HepG2 (cell line): ENCODE measurements at regions of chr2 and their contacts with region 1.

Region 1: GRCh38 chr2:64523666-64524603 is at the start of gene AFTPH:
- DNase-seq: peak; percentile 99
- ATAC-seq: peak; percentile 96
- H3K4me3 ChIP-seq: peak within 1 kb of the TSS; percentile 95 to 100 (median 98)
- H3K27ac ChIP-seq: peak within 1 kb of the TSS; percentile 73
- H3K4me1 ChIP-seq: peaks cover 30% of the 10 kb centered on the region
- H3K27me3 ChIP-seq: no peaks in the 10 kb centered on the region; a peak in 1 of 5 replicates
- CTCF ChIP-seq: peak; percentile 62
- EP300 ChIP-seq: peak; percentile 34 to 54; a peak in 2 of 4 replicates
- POLR2A ChIP-seq: peak; percentile 82 to 90
- RAD21 ChIP-seq: no peak; the same call in 1 of the 2 replicates
- total RNA-seq, gene AFTPH: 36.8 and 45.9 TPM in 2 replicates

Region 2: DNA sequence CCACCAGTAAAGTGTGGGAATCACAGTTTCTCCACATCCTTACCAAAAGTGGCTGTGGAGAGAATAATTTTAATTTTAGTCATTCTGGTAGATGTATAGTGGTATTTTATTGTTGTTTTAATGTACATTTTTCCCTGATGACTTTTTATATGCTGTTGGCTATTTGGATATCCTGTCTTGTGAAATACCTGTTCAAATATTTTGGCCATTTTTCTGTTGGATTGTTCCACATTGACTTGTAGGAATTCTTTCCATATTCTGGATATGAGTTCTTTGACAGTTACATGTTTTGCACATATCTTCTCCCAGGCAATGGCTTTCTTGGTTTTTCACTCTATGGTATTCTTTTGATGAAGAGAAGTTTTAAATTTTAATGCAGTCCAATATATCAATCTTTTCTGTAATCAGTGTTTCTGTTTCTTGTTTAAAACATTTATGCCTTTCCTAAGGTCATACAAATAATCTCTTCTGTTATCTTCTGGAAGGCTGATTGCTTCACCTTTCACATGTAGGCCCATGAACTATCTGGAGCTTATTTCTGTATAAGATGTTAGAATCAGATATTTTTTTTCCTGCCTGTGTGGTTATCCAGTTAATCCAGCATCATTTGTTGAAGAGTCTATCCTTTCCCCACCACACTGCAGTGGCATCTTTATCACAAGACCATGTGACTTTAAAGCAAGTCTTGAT is 19.2 kb after region 1 on chr2:
- CTCF ChIA-PET with region 1: no interaction called
- POLR2A ChIA-PET with region 1: interaction called, 6 read pairs
- in situ Hi-C with region 1: no loop called
- intact Hi-C with region 1: loop called (anchors 2 kb)
- DNase-seq: peak; percentile 44
- ATAC-seq: peak; percentile 20; the same call in 1 of the 3 replicates
- H3K4me3 ChIP-seq: peak overlapping the region in 2 of 3 experiments; percentile 35 to 38; a peak in 3 of 6 replicates
- H3K27ac ChIP-seq: peak overlapping the region; percentile 10
- H3K4me1 ChIP-seq: peaks cover 65% of the 10 kb centered on the region
- H3K27me3 ChIP-seq: no peaks in the 10 kb centered on the region
- CTCF ChIP-seq: no peak
- EP300 ChIP-seq: no peak
- POLR2A ChIP-seq: no peak
- RAD21 ChIP-seq: no peak

Region 3: GRCh38 chr2:64562148-64562784 is 38.3 kb after region 1 on chr2:
- CTCF ChIA-PET with region 1: interaction called, 38 read pairs
- POLR2A ChIA-PET with region 1: interaction called, 3 read pairs
- in situ Hi-C with region 1: no loop called
- intact Hi-C with region 1: loop called (anchors 1 kb)
- DNase-seq: peak; percentile 26
- ATAC-seq: peak; percentile 38; the same call in 1 of the 3 replicates
- H3K4me3 ChIP-seq: no peak overlapping the region
- H3K27ac ChIP-seq: no peak overlapping the region
- H3K4me1 ChIP-seq: no peaks in the 10 kb centered on the region
- H3K27me3 ChIP-seq: no peaks in the 10 kb centered on the region
- CTCF ChIP-seq: peak; percentile 48
- EP300 ChIP-seq: no peak
- POLR2A ChIP-seq: no peak
- RAD21 ChIP-seq: no peak

Region 4: DNA sequence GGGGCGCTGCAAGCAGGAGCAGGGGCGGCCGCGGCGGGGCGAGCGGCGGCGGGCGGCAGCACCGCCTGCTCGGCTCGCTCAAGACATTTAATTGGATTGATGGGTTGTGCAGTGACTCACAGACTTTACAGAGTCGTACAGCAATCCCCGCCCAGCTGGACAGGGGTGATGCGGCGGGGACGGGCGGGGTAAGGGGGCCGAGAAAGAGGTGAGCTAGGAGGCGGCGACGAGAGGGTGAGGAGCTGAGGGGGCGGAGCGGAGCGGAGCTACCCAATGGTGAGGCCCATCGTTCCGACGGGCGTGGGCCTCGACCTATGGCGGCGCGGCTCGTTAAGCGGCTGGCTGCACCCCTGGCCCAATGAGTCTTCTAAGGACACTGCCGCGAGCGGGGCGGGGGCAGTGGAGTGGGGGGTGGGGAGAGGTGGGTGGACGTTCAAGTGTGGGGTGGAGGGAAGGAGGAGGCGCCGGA is 226.9 kb after region 1 on chr2:
- CTCF ChIA-PET with region 1: no interaction called
- POLR2A ChIA-PET with region 1: interaction called, 3 read pairs
- in situ Hi-C with region 1: no loop called
- intact Hi-C with region 1: loop called (anchors 5 kb)
- DNase-seq: peak; percentile 99
- ATAC-seq: peak; percentile 92
- H3K4me3 ChIP-seq: peak overlapping the region; percentile 80 to 93 (median 89)
- H3K27ac ChIP-seq: peak overlapping the region; percentile 80
- H3K4me1 ChIP-seq: peaks cover 42% of the 10 kb centered on the region
- H3K27me3 ChIP-seq: no peaks in the 10 kb centered on the region; a peak in 1 of 5 replicates
- CTCF ChIP-seq: no peak; the same call in 1 of the 2 replicates
- EP300 ChIP-seq: peak in 1 of 2 experiments; percentile 9; a peak in 2 of 4 replicates
- POLR2A ChIP-seq: peak; percentile 73 to 92
- RAD21 ChIP-seq: peak; percentile 59; the same call in 1 of the 2 replicates

Region 5: GRCh38 chr2:64865073-64865830 is 341.3 kb after region 1 on chr2:
- CTCF ChIA-PET with region 1: interaction called, 15 read pairs
- POLR2A ChIA-PET with region 1: interaction called, 3 read pairs
- in situ Hi-C with region 1: no loop called
- intact Hi-C with region 1: loop called (anchors 2 kb)
- DNase-seq: no peak
- ATAC-seq: peak; percentile 90
- H3K4me3 ChIP-seq: peak overlapping the region; percentile 78 to 86 (median 81)
- H3K27ac ChIP-seq: no peak overlapping the region
- H3K4me1 ChIP-seq: peaks cover 30% of the 10 kb centered on the region
- H3K27me3 ChIP-seq: peaks cover 5 to 61% of the 10 kb centered on the region in 2 experiments
- CTCF ChIP-seq: peak; percentile 60; the same call in 1 of the 2 replicates
- EP300 ChIP-seq: no peak
- POLR2A ChIP-seq: no peak
- RAD21 ChIP-seq: peak; percentile 98

Region 6: DNA sequence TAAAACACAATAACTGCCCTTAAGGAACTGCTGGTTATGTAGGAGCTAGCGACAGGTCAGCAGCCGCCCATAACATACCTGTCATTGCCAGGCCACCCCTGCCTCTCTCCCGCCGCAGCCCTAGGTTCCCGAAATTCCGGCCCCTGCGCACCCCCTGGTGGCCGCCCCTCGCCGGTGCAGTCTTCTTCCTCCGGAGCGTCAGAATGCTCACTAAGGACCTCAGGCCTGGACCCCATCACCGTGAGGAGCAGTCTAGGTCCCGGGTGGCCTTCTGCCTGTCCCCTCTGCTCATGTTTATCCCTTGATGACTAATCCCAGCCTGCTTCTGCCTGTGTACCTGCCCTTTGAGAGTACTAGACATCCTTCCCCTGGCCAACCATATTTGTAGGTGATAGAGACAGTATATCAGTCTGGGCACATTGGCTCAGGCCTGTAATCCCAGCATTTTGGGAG is 349.6 kb after region 1 on chr2:
- CTCF ChIA-PET with region 1: interaction called, 11 read pairs
- POLR2A ChIA-PET with region 1: no interaction called
- in situ Hi-C with region 1: no loop called
- intact Hi-C with region 1: loop called (anchors 1 kb)
- DNase-seq: peak; percentile 53
- ATAC-seq: peak; percentile 96
- H3K4me3 ChIP-seq: peak overlapping the region in 1 of 3 experiments; percentile 32; a peak in 1 of 6 replicates
- H3K27ac ChIP-seq: no peak overlapping the region
- H3K4me1 ChIP-seq: 0 out of 2 replicates have a peak, but pooled peaks cover 8% of the 10 kb centered on the region
- H3K27me3 ChIP-seq: peaks cover 0 to 13% of the 10 kb centered on the region in 2 experiments; a peak in 2 of 5 replicates
- CTCF ChIP-seq: peak; percentile 99
- EP300 ChIP-seq: no peak
- POLR2A ChIP-seq: no peak
- RAD21 ChIP-seq: peak; percentile 95

Region 7: GRCh38 chr2:64888591-64889309 is 364.8 kb after region 1 on chr2:
- CTCF ChIA-PET with region 1: no interaction called
- POLR2A ChIA-PET with region 1: no interaction called
- in situ Hi-C with region 1: no loop called
- intact Hi-C with region 1: loop called (anchors 5 kb)
- DNase-seq: peak; percentile 74
- ATAC-seq: peak; percentile 97
- H3K4me3 ChIP-seq: no peak overlapping the region
- H3K27ac ChIP-seq: no peak overlapping the region
- H3K4me1 ChIP-seq: no peaks in the 10 kb centered on the region; the same call in 1 of the 2 replicates
- H3K27me3 ChIP-seq: peaks cover 0 to 9% of the 10 kb centered on the region in 2 experiments; a peak in 1 of 5 replicates
- CTCF ChIP-seq: peak; percentile 71
- EP300 ChIP-seq: peak in 1 of 2 experiments; percentile 45; a peak in 1 of 4 replicates
- POLR2A ChIP-seq: no peak
- RAD21 ChIP-seq: peak; percentile 75

Region 8: GRCh38 chr2:65969161-65969560 is 1445.2 kb after region 1 on chr2:
- CTCF ChIA-PET with region 1: no interaction called
- POLR2A ChIA-PET with region 1: no interaction called
- in situ Hi-C with region 1: no loop called
- intact Hi-C with region 1: no loop called
- DNase-seq: peak; percentile 20
- ATAC-seq: peak; percentile 93
- H3K4me3 ChIP-seq: no peak overlapping the region
- H3K27ac ChIP-seq: no peak overlapping the region
- H3K4me1 ChIP-seq: peaks cover 14% of the 10 kb centered on the region
- H3K27me3 ChIP-seq: no peaks in the 10 kb centered on the region; a peak in 1 of 5 replicates
- CTCF ChIP-seq: peak; percentile 33
- EP300 ChIP-seq: no peak
- POLR2A ChIP-seq: no peak
- RAD21 ChIP-seq: no peak